ENCODE measurements at regions of chr10 and their contacts with region 1.

Region 1: DNA sequence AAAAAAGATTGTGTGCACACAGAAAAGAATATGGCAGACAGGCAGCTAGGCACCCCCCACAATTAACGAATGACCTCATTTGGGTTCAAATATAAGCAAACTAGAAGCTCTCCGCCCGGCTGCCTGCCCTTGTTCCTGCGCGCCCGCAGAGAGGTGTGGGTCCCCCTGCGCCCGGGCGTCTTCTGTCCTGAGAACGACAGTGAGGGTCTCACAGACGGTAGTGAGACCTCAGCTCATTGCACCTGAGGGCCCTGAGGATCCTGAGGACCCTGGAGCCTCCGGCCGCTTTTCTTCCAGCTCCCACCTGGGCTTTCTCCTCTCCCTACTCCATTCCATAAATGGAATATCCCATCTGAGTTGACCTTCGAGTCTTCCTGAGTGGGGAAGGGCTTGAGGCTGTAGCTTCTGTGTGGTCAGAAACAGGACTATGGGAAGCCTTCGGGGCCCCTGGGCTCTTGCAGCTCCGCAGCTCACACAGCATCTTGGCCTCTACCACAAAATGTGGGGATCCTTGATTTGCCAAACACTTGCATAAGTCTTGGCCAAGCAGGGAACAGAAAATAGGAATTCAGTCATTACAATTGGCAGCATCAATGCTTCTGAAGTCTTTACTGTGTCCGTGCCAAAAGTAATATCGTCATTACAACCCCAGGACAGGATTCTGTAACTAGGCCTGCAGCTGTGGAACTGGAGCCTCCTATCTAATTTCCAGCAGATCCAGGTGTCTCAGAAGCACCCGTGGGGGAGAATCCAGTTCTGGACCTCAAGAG is 43.8 kb downstream of the JAKMIP3 start:
- DNase-seq: no peak
- ATAC-seq: no peak
- H3K4me3 Mint-ChIP-seq: no peak overlapping the region
- H3K27ac Mint-ChIP-seq: no peak overlapping the region
- H3K4me1 Mint-ChIP-seq: no peaks in the 10 kb centered on the region
- H3K27me3 Mint-ChIP-seq: no peaks in the 10 kb centered on the region

Region 2: DNA sequence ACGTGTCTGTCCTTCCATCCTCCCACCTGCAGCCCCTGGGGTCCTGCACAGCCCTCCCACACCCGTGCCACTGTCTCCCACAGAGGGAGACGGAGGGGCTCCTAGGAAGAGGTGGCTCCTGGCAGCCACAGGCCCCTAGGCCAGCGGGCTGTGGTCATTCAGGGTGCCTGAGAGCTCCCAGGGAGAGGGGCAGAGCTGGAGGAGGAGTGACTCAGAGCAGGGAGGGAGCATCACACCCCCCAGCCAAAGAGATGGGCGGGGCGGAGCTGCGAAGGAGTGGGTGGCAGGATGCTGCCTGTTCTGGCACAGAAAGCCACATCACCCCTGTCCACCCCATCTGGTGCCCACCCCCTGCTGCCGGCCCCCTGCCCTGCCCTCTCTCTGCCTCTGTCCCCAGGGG is 147.7 kb after region 1 on chr10:
- CTCF ChIA-PET with region 1: no interaction called
- POLR2A ChIA-PET with region 1: no interaction called
- intact Hi-C with region 1: no loop called
- DNase-seq: peak; percentile 84
- ATAC-seq: peak; percentile 91
- H3K4me3 Mint-ChIP-seq: no peak overlapping the region
- H3K27ac Mint-ChIP-seq: no peak overlapping the region
- H3K4me1 Mint-ChIP-seq: peaks cover 15% of the 10 kb centered on the region
- H3K27me3 Mint-ChIP-seq: no peaks in the 10 kb centered on the region

Region 3: DNA sequence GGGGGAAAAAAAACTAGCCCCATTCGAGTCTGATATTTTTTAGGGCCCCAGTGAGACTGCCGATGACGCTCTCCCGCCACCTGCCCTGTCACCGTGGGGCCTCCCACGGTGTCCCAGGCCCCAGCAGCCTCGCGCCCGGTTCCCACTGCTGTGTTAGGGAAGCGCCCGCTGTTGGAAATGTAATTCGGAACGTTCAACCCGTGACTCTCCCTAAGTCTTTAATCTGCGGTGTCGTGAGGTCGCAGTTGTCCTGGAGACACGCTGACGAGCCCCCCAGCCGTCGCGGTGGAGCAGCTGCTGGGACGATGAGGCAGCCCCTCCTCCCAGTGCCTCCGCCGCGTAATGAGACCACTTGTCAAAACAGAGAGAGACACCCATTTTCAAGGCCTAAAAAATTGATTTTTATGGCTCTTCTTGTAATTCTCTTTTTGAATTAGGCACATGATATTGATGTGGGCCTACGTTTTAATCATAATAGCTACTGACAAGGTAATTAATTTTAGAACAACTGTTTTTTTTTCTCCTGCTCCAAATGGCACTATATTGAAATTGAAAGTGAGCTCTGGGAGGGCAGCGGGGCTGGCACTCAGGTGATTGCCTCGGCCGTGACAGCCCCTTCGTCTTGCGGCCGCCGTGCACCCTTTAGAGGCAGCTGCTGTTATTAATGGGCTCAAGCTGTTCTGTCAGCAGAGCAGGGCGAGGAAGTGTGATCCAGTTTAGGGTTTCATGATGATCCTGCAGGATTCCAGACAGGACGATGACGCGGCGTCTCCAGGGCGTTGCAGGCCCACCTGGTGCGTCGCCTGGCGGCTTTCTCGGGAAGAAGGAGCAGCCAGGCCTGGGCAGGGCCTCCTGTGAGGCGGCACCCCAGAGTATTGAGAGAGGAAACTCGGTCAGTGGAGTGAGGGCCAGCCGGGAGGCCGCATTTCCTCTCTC is 613.1 kb after region 1 on chr10:
- CTCF ChIA-PET with region 1: no interaction called
- POLR2A ChIA-PET with region 1: no interaction called
- intact Hi-C with region 1: loop called in 1 of 2 experiments (anchors 10 kb)
- DNase-seq: no peak
- ATAC-seq: no peak
- H3K4me3 Mint-ChIP-seq: no peak overlapping the region
- H3K27ac Mint-ChIP-seq: no peak overlapping the region
- H3K4me1 Mint-ChIP-seq: no peaks in the 10 kb centered on the region
- H3K27me3 Mint-ChIP-seq: no peaks in the 10 kb centered on the region

Measured in activated CD4-positive, alpha-beta T cell treated with anti-CD3 and anti-CD28 coated beads for 36 hours (primary cell).